ENCODE measurements at regions of chr2 and their contacts with region 1.

Region 1: GRCh38 chr2:219119422-219120043 is 41.1 kb downstream of the NHEJ1 start:
- DNase-seq: peak; percentile 69
- ATAC-seq: peak; percentile 49
- H3K4me3 Mint-ChIP-seq: no peak overlapping the region
- H3K27ac Mint-ChIP-seq: no peak overlapping the region
- H3K4me1 Mint-ChIP-seq: peaks cover 7% of the 10 kb centered on the region
- H3K27me3 Mint-ChIP-seq: no peaks in the 10 kb centered on the region

Region 2: GRCh38 chr2:219010162-219010756 is 109.3 kb before region 1 on chr2:
- CTCF ChIA-PET with region 1: interaction called, 10 read pairs
- DNase-seq: no peak
- ATAC-seq: peak; percentile 63
- H3K4me3 Mint-ChIP-seq: no peak overlapping the region
- H3K27ac Mint-ChIP-seq: no peak overlapping the region
- H3K4me1 Mint-ChIP-seq: no peaks in the 10 kb centered on the region
- H3K27me3 Mint-ChIP-seq: peaks cover 21% of the 10 kb centered on the region

Region 3: DNA sequence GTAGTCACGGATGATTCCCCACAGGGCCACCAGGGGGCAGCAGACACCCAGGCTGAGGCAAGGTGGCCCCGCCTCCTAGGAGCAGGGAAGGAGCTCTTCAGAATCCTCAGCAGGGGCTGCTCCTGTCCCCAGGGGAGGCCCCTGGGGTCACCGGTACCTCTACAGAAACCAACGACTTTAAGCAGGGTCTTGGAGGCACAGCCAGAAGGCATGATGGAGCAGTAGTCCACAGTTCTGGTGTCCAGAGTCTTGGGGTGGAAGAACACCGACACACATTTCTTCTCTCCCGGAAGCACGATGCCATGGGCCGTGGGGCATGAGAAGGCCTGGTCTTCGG is 89.7 kb before region 1 on chr2:
- CTCF ChIA-PET with region 1: interaction called, 69 read pairs
- DNase-seq: peak; percentile 78
- ATAC-seq: peak; percentile 88
- H3K4me3 Mint-ChIP-seq: no peak overlapping the region
- H3K27ac Mint-ChIP-seq: no peak overlapping the region
- H3K4me1 Mint-ChIP-seq: no peaks in the 10 kb centered on the region
- H3K27me3 Mint-ChIP-seq: peaks cover 25% of the 10 kb centered on the region

Region 4: DNA sequence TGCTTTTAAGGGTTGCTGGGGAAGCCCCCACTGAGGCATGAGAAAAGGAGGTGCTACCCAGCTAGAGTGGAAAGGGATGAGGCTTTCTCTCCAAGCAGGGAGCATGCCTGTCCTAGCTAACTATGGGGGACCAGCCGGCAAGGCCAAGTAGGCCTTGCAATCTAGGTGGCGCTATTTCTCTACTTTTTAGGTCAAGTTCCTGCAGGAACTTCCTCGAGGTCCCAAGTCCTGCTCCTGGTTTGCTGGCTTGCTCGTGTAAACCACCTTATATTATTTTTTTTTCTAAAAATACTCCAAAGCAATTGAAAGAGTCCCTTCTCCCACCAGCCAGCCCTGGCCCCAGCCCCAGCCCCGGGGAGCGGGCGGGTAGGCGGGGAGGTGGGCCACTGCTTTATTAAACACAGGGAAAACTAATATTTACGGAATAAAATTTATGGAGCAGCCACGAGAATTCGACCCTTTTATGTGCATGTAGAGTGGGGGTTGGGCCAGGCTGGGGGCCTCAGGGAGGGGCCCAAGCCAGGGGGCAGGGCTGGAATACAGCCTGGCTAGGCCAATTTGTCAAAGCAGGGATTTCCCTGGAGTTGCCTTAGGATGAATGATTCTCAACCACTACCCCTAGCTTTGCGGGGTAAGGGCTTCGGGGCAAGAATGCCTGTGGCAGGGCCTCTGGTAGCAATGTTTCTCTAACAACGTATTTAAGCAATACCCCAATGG is 46.0 kb before region 1 on chr2:
- CTCF ChIA-PET with region 1: interaction called, 69 read pairs
- DNase-seq: no peak
- ATAC-seq: no peak
- H3K4me3 Mint-ChIP-seq: no peak overlapping the region
- H3K27ac Mint-ChIP-seq: no peak overlapping the region
- H3K4me1 Mint-ChIP-seq: no peaks in the 10 kb centered on the region
- H3K27me3 Mint-ChIP-seq: no peaks in the 10 kb centered on the region

Region 5: DNA sequence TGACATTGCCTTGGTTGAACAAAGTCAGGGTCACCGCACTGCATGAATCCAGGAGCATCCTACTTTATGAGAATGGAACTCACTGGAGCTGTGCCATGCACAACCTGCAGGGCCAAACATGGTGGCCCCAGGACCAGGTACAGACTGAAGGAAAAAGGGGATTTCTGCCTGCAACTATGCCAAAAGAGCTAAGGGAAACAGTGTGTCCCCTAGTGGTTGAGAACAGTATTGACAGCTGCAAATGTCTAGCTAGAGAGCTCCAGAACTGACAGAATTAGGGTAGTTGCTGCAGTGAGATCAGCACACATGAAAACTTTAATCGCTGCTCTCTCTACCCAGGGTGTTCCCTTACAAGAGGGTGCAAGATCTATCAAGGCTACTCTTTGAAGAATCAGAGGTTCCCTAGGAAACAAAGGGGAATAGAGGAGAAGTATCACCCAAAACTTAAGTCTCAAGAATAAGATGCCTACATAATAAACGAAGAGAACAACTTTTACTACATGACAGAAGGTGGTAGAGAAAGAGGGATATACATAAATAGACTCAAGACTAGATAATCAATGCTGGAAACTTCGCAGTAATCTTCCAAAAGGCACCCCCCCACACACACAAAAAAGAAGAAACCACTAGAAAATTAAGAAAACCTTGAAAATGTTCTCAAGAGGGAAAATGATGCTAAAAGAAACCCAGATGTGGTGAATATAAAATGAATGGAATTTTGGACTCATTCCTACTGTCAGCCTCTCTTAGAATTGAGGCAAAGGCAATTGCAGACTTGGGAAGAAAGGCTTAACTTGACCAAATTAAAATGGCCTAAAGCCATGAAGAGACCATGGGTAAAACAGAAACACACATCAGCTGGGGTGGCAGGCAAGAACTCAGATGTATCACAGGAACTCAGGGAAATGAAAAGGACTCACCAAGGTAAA is 15.2 kb before region 1 on chr2:
- CTCF ChIA-PET with region 1: interaction called, 17 read pairs
- DNase-seq: no peak
- ATAC-seq: peak; percentile 57
- H3K4me3 Mint-ChIP-seq: no peak overlapping the region
- H3K27ac Mint-ChIP-seq: no peak overlapping the region
- H3K4me1 Mint-ChIP-seq: peaks cover 3% of the 10 kb centered on the region
- H3K27me3 Mint-ChIP-seq: no peaks in the 10 kb centered on the region

Region 6: DNA sequence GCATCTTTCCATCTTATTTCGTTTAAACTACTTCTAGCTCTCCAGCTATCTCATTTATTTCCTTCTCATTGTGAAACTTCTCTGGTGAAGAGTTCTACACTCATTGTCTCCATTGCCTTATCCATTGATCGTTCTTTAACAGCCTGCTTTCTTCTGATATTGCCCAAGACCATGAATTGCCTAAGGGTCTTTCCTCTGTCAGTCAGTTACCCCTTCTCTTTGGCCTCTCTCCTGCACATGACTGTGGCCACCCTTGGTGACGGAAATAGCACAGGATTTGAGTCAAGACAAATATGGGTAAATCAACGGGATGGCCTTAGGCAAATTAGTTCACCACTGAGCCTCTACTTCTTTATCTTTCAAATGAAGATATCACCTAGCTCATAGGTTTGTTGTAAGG is 14.4 kb after region 1 on chr2:
- CTCF ChIA-PET with region 1: interaction called, 10 read pairs
- DNase-seq: no peak
- ATAC-seq: no peak
- H3K4me3 Mint-ChIP-seq: no peak overlapping the region
- H3K27ac Mint-ChIP-seq: no peak overlapping the region
- H3K4me1 Mint-ChIP-seq: peaks cover 6% of the 10 kb centered on the region
- H3K27me3 Mint-ChIP-seq: no peaks in the 10 kb centered on the region